ENCODE measurements at regions of chr1 and their contacts with region 1.

Region 1: DNA sequence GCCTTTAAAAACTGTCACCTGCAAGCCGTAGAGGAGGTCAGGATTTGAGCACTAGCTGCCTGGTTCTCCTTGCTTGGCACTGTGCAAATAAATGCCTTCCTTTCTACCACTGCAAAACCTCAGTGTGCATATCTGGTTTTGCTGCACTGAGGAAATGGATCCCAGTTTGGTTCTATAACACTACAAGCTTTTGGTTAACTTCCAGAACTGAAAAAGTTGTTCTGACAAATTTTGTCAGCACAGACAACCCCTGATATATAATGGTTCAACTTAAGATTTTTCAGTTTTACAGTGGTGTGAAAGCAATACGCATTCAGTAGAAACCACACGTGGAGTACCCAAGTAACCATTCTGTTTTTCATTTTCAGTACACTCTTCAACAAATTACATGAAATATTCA is 29.8 kb upstream of the GALNT2 start:
- DNase-seq: no peak
- H3K4me3 ChIP-seq: no peak overlapping the region
- H3K4me3 Mint-ChIP-seq: no peak overlapping the region
- H3K27ac Mint-ChIP-seq: peak overlapping the region; percentile 21
- H3K4me1 ChIP-seq: peaks cover 18% of the 10 kb centered on the region
- H3K4me1 Mint-ChIP-seq: peaks cover 6% of the 10 kb centered on the region
- H3K27me3 ChIP-seq: no peaks in the 10 kb centered on the region
- H3K27me3 Mint-ChIP-seq: no peaks in the 10 kb centered on the region
- CTCF ChIP-seq: no peak

Region 2: DNA sequence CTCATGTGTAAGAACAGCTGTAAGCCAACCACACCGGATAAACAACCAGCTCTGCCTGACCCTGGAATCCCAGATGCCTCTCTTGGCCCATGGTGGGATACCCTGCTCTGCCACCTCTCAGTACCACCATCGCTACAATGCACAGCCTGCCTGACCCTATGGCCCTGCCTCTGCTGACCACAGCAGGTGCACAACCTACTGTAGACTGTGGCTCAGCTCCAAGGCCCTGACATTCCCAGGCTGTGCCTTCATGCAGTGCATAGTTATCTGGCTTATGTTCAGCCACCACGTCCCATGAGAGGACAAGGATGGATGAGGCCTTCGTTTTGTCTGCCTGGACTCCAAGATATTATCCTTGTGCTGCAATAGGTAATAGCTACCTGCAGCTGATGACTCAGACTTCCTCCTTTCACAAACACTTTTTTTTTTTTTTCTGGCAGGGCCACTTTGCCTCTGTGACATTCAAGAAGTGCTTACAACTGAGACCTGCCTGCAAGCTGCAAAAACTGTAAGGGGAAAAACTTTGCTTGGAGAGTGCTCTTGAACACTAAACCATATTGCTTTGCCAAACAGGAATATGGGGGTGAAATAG is 233.5 kb before region 1 on chr1:
- CTCF ChIA-PET with region 1: interaction called, 13 read pairs
- POLR2A ChIA-PET with region 1: no interaction called
- intact Hi-C with region 1: no loop called
- DNase-seq: no peak
- H3K4me3 ChIP-seq: no peak overlapping the region
- H3K4me3 Mint-ChIP-seq: no peak overlapping the region
- H3K27ac Mint-ChIP-seq: no peak overlapping the region
- H3K4me1 ChIP-seq: no peaks in the 10 kb centered on the region
- H3K4me1 Mint-ChIP-seq: no peaks in the 10 kb centered on the region
- H3K27me3 ChIP-seq: no peaks in the 10 kb centered on the region
- H3K27me3 Mint-ChIP-seq: no peaks in the 10 kb centered on the region
- CTCF ChIP-seq: no peak

Region 3: GRCh38 chr1:229920683-229921082 is 116.6 kb before region 1 on chr1:
- CTCF ChIA-PET with region 1: no interaction called
- POLR2A ChIA-PET with region 1: no interaction called
- intact Hi-C with region 1: no loop called
- DNase-seq: no peak
- H3K4me3 ChIP-seq: no peak overlapping the region
- H3K4me3 Mint-ChIP-seq: no peak overlapping the region
- H3K27ac Mint-ChIP-seq: no peak overlapping the region
- H3K4me1 ChIP-seq: no peaks in the 10 kb centered on the region
- H3K4me1 Mint-ChIP-seq: no peaks in the 10 kb centered on the region
- H3K27me3 ChIP-seq: no peaks in the 10 kb centered on the region
- H3K27me3 Mint-ChIP-seq: peaks cover 8% of the 10 kb centered on the region
- CTCF ChIP-seq: no peak

Measured in Caco-2 (cell line).